Prostate gland (tissue), 2 donors: ENCODE measurements at regions of chr2 and their contacts with region 1.

Region 1: DNA sequence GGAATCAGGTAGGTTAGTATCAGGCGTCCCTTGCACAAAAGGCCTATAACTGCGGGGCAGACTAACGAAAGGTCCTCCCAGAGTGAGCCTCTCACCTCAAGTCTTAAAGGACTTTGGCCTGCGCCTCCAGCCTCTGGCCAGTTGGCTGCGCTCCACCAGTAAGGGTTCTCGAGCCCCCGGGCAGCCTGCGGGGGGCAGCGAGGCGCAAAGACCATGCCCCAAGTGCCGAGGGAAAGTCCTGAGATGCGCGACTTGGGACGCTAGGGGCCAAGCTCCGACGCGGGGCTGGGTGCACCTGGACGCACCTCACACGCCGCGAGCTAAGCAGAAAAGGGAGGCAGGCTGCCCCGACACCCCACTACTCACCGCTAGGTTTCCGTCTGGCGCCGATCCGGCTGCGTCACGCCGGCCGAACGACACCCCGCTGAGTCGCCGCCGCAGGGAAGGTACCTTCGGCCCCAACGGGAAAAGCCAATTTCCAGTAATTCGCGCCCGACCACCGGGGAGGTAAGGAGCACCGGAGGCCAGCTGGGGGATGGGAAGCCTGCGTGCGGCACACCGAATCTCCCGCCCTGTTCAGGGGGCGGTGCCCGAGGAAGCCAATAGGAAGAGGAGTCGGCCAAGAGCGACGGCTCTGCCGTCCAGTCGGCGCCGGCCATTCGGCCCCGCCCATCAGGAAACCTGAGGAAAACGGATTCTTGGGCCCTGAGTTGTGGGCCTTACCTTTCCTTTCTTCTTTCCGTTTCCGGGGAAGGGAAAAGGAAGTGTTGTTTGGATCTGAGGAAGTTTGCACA is at the start of gene ORC2:
- DNase-seq: peak; percentile 95
- H3K4me3 ChIP-seq: peak within 1 kb of the TSS; percentile 77 to 89
- H3K27ac ChIP-seq: peak within 1 kb of the TSS; percentile 80 to 85
- H3K4me1 ChIP-seq: no peaks in the 10 kb centered on the region
- H3K27me3 ChIP-seq: no peaks in the 10 kb centered on the region
- CTCF ChIP-seq: peak in 3 of 4 experiments; percentile 21 to 64 (median 61)
- POLR2A ChIP-seq: peak; percentile 32
- total RNA-seq, gene ORC2: 21.9 to 32.1 TPM

Region 2: GRCh38 chr2:201071479-201072200 is 108.3 kb after region 1 on chr2 and contains the starts of genes HYCC2 and NDUFB3:
- intact Hi-C with region 1: loop called (anchors 2 kb)
- DNase-seq: peak; percentile 90
- H3K4me3 ChIP-seq: peak within 1 kb of the TSS; percentile 81 to 90
- H3K27ac ChIP-seq: peak within 1 kb of the TSS; percentile 84 to 87
- H3K4me1 ChIP-seq: peaks cover 5% of the 10 kb centered on the region
- H3K27me3 ChIP-seq: no peaks in the 10 kb centered on the region
- CTCF ChIP-seq: peak in 3 of 4 experiments; percentile 44 to 65 (median 61)
- POLR2A ChIP-seq: peak; percentile 64
- total RNA-seq, gene HYCC2: 13.6 to 16.3 TPM
- total RNA-seq, gene NDUFB3: 45.5 to 84.3 TPM

Region 3: GRCh38 chr2:201158111-201158929 is 195.0 kb after region 1 on chr2:
- intact Hi-C with region 1: loop called (anchors 10 kb)
- DNase-seq: peak; percentile 61
- H3K4me3 ChIP-seq: no peak overlapping the region
- H3K27ac ChIP-seq: peak overlapping the region; percentile 10 to 45
- H3K4me1 ChIP-seq: no peaks in the 10 kb centered on the region
- H3K27me3 ChIP-seq: no peaks in the 10 kb centered on the region
- CTCF ChIP-seq: peak in 3 of 4 experiments; percentile 50 to 72 (median 57)
- POLR2A ChIP-seq: no peak